SK-N-SH (cell line): ENCODE measurements at regions of chr16 and their contacts with region 1.

Region 1: GRCh38 chr16:84617791-84618580 is at the start of gene COTL1:
- DNase-seq: peak; percentile 97
- H3K4me3 ChIP-seq: peak within 1 kb of the TSS; percentile 68 to 83
- H3K27ac ChIP-seq: peak within 1 kb of the TSS; percentile 7 to 92; a peak in 3 of 4 replicates
- H3K4me1 ChIP-seq: peaks cover 13 to 24% of the 10 kb centered on the region in 2 experiments; a peak in 3 of 4 replicates
- H3K27me3 ChIP-seq: no peaks in the 10 kb centered on the region
- CTCF ChIP-seq: no peak
- EP300 ChIP-seq: 0 out of 4 replicates have a peak, but pooled peaks of 1 of the 2 experiments have one; percentile 31
- RAD21 ChIP-seq: no peak
- polyA plus RNA-seq, gene COTL1: 59.5 and 91.6 TPM in 2 replicates

Region 2: GRCh38 chr16:84504420-84505248 is 113.4 kb before region 1 on chr16 and contains the start of gene MEAK7:
- CTCF ChIA-PET with region 1: interaction called, 79 read pairs
- POLR2A ChIA-PET with region 1: no interaction called
- DNase-seq: peak; percentile 98
- H3K4me3 ChIP-seq: peak within 1 kb of the TSS; percentile 73 to 93
- H3K27ac ChIP-seq: peak within 1 kb of the TSS; percentile 67 to 82
- H3K4me1 ChIP-seq: peaks cover 14 to 18% of the 10 kb centered on the region in 2 experiments; a peak in 3 of 4 replicates
- H3K27me3 ChIP-seq: no peaks in the 10 kb centered on the region
- CTCF ChIP-seq: peak; percentile 19; the same call in 1 of the 2 replicates
- EP300 ChIP-seq: no peak
- RAD21 ChIP-seq: no peak
- polyA plus RNA-seq, gene MEAK7: 11.9 and 19.0 TPM in 2 replicates

Region 3: DNA sequence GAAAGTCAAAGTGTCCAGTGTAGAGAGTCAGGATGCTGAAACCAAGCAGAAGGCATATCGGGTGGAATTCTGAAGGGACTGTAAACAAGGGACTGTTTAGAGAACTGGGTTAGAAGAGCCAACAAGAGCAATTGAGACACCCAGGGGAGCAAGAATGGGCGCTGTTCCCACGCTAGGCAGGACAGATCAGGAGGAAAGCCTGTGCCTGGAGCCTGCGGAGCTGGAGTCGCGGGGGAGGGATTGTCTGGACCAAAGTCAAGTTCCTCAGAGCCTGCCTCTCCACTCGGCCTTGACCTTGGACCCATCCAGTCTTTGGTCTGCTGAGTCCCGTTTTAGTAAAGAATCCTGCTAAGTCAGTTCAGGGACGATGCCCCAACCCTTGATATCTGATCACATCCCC is 15.6 kb after region 1 on chr16:
- CTCF ChIA-PET with region 1: interaction called, 13 read pairs
- POLR2A ChIA-PET with region 1: no interaction called
- DNase-seq: no peak
- H3K4me3 ChIP-seq: no peak overlapping the region
- H3K27ac ChIP-seq: no peak overlapping the region
- H3K4me1 ChIP-seq: no peaks in the 10 kb centered on the region; a peak in 1 of 4 replicates
- H3K27me3 ChIP-seq: no peaks in the 10 kb centered on the region
- CTCF ChIP-seq: no peak
- EP300 ChIP-seq: no peak
- RAD21 ChIP-seq: no peak

Region 4: DNA sequence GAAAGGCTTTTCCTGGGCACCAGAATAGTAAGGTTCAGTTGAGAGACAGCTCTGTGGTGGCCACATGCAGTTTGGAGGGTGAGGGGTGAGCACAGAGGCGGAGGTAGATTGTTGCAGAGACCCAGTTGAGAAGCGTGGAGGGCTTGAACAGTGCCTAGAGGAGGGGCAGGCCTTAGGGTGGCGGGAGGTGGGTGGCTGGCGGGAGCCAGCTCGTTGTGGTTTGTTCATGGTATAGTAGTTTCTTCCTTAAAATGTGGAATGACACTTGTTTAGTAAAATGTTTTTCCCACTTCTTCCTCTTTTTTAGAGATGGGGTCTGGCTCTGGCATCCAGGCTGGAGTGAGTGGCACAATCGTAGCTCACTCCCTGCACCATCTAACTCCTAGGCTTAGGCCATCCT is 96.0 kb after region 1 on chr16:
- CTCF ChIA-PET with region 1: interaction called, 15 read pairs
- POLR2A ChIA-PET with region 1: no interaction called
- DNase-seq: no peak
- H3K4me3 ChIP-seq: no peak overlapping the region
- H3K27ac ChIP-seq: no peak overlapping the region
- H3K4me1 ChIP-seq: peaks cover 3 to 4% of the 10 kb centered on the region in 2 experiments; a peak in 2 of 4 replicates
- H3K27me3 ChIP-seq: no peaks in the 10 kb centered on the region
- CTCF ChIP-seq: no peak
- EP300 ChIP-seq: no peak
- RAD21 ChIP-seq: no peak

Region 5: GRCh38 chr16:84738255-84739038 is 120.5 kb after region 1 on chr16:
- CTCF ChIA-PET with region 1: interaction called, 275 read pairs
- POLR2A ChIA-PET with region 1: no interaction called
- DNase-seq: peak; percentile 74
- H3K4me3 ChIP-seq: peak overlapping the region in 1 of 2 experiments; percentile 6; a peak in 1 of 4 replicates
- H3K27ac ChIP-seq: no peak overlapping the region
- H3K4me1 ChIP-seq: peaks cover 35 to 37% of the 10 kb centered on the region in 2 experiments
- H3K27me3 ChIP-seq: no peaks in the 10 kb centered on the region
- CTCF ChIP-seq: peak; percentile 94
- EP300 ChIP-seq: no peak
- RAD21 ChIP-seq: peak; percentile 64

Region 6: DNA sequence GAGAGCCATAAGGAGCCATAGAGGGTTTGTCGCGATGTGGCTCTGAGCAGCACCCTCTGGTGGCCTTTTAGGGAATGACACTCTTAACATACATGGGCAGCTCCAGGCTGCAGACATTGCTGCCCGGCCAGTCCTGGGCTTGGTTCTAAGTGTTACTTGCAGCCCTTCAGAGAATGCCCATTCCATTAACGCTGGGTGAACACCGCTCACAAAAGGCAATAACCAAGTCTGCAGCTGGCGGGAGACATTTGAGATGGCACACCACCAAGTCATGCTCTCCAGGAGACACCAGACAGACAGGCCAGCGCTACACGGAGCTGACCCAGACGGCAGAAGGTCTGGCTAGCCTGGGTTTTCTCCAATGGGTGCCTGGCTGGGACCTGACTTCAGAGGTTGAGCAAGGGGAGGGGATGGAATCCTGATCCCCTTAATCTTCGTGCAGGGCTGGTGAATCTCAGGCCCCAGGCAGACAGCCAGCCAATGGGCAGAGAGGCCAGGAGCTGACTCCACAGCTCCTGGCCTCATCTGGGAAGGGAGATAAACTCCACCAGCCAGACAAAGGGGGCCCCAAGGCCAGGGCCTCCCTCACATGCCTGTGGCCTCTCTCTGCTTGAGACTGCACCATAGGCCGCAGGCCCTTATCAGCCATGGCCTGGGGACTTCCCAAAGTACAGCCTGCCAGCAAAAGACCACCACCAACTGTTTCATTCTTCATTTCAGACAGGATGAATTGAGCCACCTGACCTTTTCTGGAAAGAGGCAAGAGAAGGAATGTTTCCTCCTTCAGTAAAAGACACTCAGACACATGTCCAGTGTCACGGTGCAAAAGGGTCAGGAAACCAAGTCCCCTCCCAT is 334.6 kb after region 1 on chr16:
- CTCF ChIA-PET with region 1: interaction called, 11 read pairs
- POLR2A ChIA-PET with region 1: no interaction called
- DNase-seq: peak; percentile 85
- H3K4me3 ChIP-seq: peak overlapping the region in 1 of 2 experiments; percentile 32; a peak in 1 of 4 replicates
- H3K27ac ChIP-seq: peak overlapping the region; percentile 22 to 84; a peak in 3 of 4 replicates
- H3K4me1 ChIP-seq: peaks cover 4 to 14% of the 10 kb centered on the region in 2 experiments; a peak in 2 of 4 replicates
- H3K27me3 ChIP-seq: no peaks in the 10 kb centered on the region
- CTCF ChIP-seq: peak; percentile 88
- EP300 ChIP-seq: peak in 1 of 2 experiments; percentile 71; a peak in 2 of 4 replicates
- RAD21 ChIP-seq: peak; percentile 82